ENCODE measurements at regions of chr9 and their contacts with region 1.

Region 1: GRCh38 chr9:73023025-73023541 is 70.2 kb upstream of the ALDH1A1 start:
- DNase-seq: peak; percentile 39 to 67 (median 54)
- H3K4me3 ChIP-seq: no peak overlapping the region
- H3K27ac ChIP-seq: no peak overlapping the region
- H3K4me1 ChIP-seq: peaks cover 1% of the 10 kb centered on the region
- H3K27me3 ChIP-seq: no peaks in the 10 kb centered on the region
- CTCF ChIP-seq: peak; percentile 47 to 79 (median 78)
- EP300 ChIP-seq: no peak
- POLR2A ChIP-seq: no peak

Region 2: DNA sequence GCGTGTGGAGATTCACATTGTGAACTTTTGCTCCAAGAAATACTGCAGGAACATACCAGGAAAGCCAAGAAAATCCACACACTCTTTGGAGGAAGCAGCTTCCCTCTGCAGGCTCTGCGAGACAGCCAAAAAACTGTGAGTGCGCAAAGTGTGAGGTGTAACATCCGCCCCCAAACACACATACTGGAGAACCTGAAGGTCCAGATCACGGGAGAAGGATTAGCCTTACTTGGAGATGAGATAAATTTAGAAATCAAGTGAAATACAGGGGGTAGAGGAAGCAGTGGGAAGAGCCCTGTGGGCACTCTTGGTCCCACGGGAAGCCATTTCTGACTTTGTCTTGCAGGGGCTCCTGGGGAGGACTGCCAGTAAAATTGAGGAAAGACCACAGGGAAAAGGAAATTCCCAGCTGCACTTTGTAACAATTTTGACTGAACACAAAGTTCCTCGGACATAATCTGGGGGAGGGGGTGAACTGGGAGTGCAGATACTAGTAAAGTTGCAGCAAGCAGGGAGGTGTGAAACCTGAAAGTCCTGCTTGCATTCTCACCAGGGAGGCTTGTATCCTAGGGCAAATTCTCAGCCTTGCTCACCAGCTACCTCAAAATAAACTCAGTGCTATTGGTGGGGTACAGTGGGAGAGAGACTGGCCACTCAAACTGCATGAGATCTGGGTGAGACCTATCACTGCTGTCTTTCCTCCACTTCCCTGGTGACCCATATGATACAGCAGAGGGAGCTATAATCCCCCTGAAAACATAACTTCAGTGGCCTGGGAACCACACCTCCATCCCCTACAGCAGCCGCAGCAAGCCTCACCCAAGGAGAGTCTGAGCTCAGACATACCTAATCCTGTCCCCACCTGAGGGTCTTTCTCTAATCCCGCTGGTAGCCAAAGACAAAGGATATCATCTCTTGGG is 179.3 kb before region 1 on chr9:
- intact Hi-C with region 1: no loop called
- DNase-seq: peak in 1 of 5 donors; percentile 49
- H3K4me3 ChIP-seq: no peak overlapping the region
- H3K27ac ChIP-seq: no peak overlapping the region
- H3K4me1 ChIP-seq: no peaks in the 10 kb centered on the region
- H3K27me3 ChIP-seq: no peaks in the 10 kb centered on the region
- CTCF ChIP-seq: no peak
- EP300 ChIP-seq: no peak
- POLR2A ChIP-seq: no peak

Region 3: DNA sequence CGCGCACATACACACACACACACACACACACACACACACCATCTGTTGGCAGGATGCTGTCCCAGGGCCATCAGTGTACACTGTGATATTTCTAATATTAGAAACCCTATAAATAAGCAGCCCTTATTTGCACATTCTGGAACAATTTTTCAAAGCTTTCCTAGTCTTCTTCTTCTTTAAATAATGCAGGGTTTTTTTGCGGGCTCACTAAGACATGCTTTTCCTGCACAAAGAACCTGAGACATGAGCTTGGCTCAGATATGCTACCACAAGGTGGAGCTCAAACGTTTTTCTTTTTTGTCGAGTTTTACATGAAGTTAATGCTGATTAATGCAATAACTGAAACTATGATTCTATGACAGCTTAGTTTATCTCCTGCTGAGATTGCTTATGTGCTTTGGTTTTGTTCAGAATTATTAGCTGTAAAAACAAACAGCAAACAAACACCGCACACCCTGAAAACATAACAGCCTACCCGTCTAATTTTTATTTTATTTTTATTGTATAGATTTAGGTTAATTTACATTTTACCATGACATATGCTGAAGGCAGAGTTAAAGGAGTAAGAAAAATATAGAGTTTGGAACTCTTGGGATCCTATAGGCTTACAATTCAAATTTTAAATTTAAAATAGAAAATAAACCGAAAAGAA is 166.0 kb before region 1 on chr9:
- intact Hi-C with region 1: loop called in 2 of 4 experiments (anchors 5 to 10 kb)
- DNase-seq: peak in 3 of 5 donors; percentile 16 to 59 (median 25)
- H3K4me3 ChIP-seq: no peak overlapping the region
- H3K27ac ChIP-seq: no peak overlapping the region
- H3K4me1 ChIP-seq: peaks cover 10% of the 10 kb centered on the region
- H3K27me3 ChIP-seq: no peaks in the 10 kb centered on the region
- CTCF ChIP-seq: peak; percentile 54 to 71 (median 68)
- EP300 ChIP-seq: no peak
- POLR2A ChIP-seq: no peak

Region 4: DNA sequence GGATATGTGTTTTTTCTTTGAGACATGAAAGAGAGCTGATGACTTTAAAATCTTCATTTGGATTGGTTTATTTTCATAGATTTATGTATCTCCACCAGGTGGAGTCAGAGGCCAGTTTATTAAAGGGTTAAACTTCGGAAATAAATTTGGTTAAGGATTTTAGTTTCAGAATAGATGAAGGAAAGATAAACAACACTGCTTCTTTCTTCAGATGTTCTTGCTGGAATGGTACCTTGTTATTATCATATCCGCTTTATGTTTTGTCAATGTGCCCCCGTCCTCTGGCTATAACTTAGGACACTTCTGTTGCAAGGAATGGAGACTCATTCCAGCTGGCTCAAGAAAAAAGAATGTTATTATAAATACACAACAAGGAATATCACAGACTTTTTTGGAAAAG is 151.4 kb before region 1 on chr9:
- intact Hi-C with region 1: loop called in 1 of 4 experiments (anchors 10 kb)
- DNase-seq: no peak
- H3K4me3 ChIP-seq: no peak overlapping the region
- H3K27ac ChIP-seq: no peak overlapping the region
- H3K4me1 ChIP-seq: peaks cover 8% of the 10 kb centered on the region
- H3K27me3 ChIP-seq: no peaks in the 10 kb centered on the region
- CTCF ChIP-seq: peak in 2 of 3 donors; percentile 22 to 47
- EP300 ChIP-seq: no peak
- POLR2A ChIP-seq: no peak

Region 5: DNA sequence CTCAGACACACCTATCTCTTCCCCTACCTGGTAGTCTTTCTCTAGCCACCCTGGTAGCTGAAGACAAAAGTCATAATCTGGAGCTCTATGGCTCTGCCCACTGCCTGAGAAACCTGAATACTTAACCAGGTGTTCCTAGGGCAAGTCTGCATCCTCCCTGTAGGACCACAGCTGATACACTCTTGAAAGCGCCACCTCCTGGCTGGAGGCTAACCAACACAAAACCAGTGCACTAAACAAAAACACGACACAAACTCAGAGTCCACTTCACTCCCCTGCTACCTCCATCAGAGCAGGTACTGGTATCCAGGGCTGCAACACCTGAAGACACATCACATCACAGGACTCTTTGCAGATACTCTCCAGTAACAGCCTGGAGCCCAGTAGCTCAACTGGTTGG is 44.0 kb after region 1 on chr9:
- intact Hi-C with region 1: no loop called
- DNase-seq: no peak
- H3K4me3 ChIP-seq: no peak overlapping the region
- H3K27ac ChIP-seq: no peak overlapping the region
- H3K4me1 ChIP-seq: no peaks in the 10 kb centered on the region
- H3K27me3 ChIP-seq: no peaks in the 10 kb centered on the region
- CTCF ChIP-seq: no peak
- EP300 ChIP-seq: no peak
- POLR2A ChIP-seq: no peak

Region 6: GRCh38 chr9:73162987-73163768 is 140.1 kb after region 1 on chr9:
- intact Hi-C with region 1: no loop called
- DNase-seq: no peak
- H3K4me3 ChIP-seq: no peak overlapping the region
- H3K27ac ChIP-seq: no peak overlapping the region
- H3K4me1 ChIP-seq: no peaks in the 10 kb centered on the region
- H3K27me3 ChIP-seq: no peaks in the 10 kb centered on the region
- CTCF ChIP-seq: no peak
- EP300 ChIP-seq: no peak
- POLR2A ChIP-seq: no peak

Measured in ovary (tissue), 10 donors.